Right ventricle myocardium superior (tissue), 1 donor: ENCODE measurements at regions of chr3 and their contacts with region 1.

Region 1: DNA sequence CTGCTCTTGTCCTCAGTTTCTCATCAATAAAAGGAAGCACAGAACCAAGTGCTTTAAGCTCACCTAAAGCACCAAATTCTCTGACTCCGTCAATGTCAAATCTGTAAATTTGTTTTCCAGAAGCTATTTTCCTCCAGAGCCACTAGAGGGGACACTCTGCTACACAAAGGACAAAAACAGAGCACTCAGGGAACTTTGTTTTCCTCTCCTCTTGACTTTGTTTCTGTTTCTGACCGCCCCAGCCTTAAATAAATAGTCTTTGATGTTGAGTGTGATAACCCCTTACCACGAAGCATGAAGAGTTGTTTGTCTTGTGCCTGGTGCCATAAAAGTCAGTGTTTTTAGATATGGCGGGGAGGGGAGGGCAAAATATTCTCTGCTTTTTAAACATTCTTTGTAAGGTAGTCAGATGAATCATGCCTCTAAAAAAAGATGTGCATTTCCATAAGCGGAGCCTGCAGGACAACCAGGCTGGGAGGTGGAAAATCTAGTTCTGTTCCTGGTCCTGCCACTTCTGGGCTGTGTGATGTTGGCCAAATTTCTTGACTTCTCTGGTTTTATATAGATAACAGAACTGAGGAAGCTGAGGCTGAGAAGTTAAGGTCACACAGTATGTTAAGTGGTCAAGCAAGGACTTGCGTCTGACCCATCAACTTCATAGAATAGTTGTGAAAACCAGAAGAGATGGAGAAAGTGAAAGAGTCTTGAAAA is 7.3 kb upstream of the ZBTB38 start:
- DNase-seq: no peak
- ATAC-seq: peak; percentile 90

Region 2: GRCh38 chr3:140859592-140860336 is 501.3 kb before region 1 on chr3:
- intact Hi-C with region 1: no loop called
- DNase-seq: no peak
- ATAC-seq: no peak

Region 3: GRCh38 chr3:141123677-141124410 is 237.2 kb before region 1 on chr3:
- intact Hi-C with region 1: no loop called
- DNase-seq: no peak
- ATAC-seq: peak; percentile 90

Region 4: GRCh38 chr3:141311496-141312353 is 49.3 kb before region 1 on chr3:
- intact Hi-C with region 1: loop called (anchors 10 kb)
- DNase-seq: peak; percentile 99
- ATAC-seq: peak; percentile 99

Region 5: DNA sequence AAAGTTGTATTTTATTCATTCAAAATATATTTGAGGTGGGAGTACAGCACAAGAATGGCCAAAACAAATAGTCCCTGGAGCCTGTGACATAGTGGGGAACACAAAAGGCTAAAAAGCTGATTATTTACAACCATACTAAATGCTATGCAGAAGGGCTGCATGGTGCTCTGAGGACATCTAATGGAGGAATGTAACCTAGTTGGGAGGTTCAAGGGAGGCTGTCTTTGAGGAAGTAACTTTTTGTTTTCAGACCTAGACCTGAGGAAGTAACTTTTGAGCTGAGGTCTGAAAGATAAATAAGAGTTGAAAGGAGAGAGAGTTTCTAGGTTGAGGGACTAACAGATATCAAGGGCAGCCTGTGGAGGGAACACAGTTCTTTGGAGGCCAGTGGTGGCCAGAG is 91.0 kb after region 1 on chr3:
- intact Hi-C with region 1: loop called (anchors 2 kb)
- DNase-seq: no peak
- ATAC-seq: peak; percentile 77